ENCODE measurements at regions of chr18 and their contacts with region 1.

Region 1: GRCh38 chr18:3062798-3063680 is 50.1 kb upstream of the LPIN2 start:
- DNase-seq: peak; percentile 55
- CTCF ChIP-seq: peak; percentile 88

Region 2: GRCh38 chr18:2932247-2933181 is 130.5 kb before region 1 on chr18:
- CTCF ChIA-PET with region 1: interaction called, 18 read pairs
- POLR2A ChIA-PET with region 1: no interaction called
- DNase-seq: peak; percentile 74
- CTCF ChIP-seq: peak; percentile 54

Region 3: GRCh38 chr18:3012964-3013804 is 49.9 kb before region 1 on chr18 and contains the start of gene LPIN2:
- CTCF ChIA-PET with region 1: interaction called, 10 read pairs
- POLR2A ChIA-PET with region 1: no interaction called
- DNase-seq: peak; percentile 98
- CTCF ChIP-seq: no peak

Region 4: GRCh38 chr18:3074087-3074486 is 11.0 kb after region 1 on chr18:
- CTCF ChIA-PET with region 1: interaction called, 74 read pairs
- POLR2A ChIA-PET with region 1: no interaction called
- DNase-seq: no peak
- CTCF ChIP-seq: no peak

Region 5: DNA sequence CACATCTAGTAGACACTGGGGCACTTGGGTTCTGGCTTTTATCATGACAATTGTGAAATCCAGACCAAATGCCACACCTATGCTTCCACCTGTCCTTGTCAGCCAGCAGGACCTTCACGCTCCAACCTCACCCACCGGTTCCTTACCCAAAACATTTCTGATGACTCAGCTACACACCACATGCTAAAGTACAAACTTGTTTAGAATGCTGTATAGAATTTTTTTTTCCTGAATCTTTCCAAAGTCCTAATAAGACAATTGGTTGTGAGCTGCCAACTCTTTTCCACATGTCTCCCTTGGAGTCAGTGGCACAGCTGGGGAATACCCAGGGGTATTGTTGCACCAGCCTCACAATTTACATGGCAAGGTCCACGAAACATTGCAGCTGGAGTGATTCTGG is 25.4 kb after region 1 on chr18:
- CTCF ChIA-PET with region 1: interaction called, 22 read pairs
- POLR2A ChIA-PET with region 1: no interaction called
- DNase-seq: no peak
- CTCF ChIP-seq: no peak

Measured in GM10248 (cell line).